K562 (cell line): ENCODE measurements at regions of chr6 and their contacts with region 1.

Region 1: GRCh38 chr6:167898673-167899311 is 72.1 kb downstream of the AFDN start:
- DNase-seq: peak in 2 of 4 experiments; percentile 27 to 43
- ATAC-seq: peak; percentile 59
- H3K4me3 ChIP-seq: no peak overlapping the region
- H3K27ac ChIP-seq: no peak overlapping the region
- H3K4me1 ChIP-seq: peaks cover 0 to 14% of the 10 kb centered on the region in 2 experiments; a peak in 4 of 5 replicates
- H3K27me3 ChIP-seq: no peaks in the 10 kb centered on the region
- CTCF ChIP-seq: peak; percentile 41 to 89 (median 53); a peak in 5 of 6 replicates
- EP300 ChIP-seq: no peak
- POLR2A ChIP-seq: no peak
- RAD21 ChIP-seq: peak; percentile 94 to 95

Region 2: DNA sequence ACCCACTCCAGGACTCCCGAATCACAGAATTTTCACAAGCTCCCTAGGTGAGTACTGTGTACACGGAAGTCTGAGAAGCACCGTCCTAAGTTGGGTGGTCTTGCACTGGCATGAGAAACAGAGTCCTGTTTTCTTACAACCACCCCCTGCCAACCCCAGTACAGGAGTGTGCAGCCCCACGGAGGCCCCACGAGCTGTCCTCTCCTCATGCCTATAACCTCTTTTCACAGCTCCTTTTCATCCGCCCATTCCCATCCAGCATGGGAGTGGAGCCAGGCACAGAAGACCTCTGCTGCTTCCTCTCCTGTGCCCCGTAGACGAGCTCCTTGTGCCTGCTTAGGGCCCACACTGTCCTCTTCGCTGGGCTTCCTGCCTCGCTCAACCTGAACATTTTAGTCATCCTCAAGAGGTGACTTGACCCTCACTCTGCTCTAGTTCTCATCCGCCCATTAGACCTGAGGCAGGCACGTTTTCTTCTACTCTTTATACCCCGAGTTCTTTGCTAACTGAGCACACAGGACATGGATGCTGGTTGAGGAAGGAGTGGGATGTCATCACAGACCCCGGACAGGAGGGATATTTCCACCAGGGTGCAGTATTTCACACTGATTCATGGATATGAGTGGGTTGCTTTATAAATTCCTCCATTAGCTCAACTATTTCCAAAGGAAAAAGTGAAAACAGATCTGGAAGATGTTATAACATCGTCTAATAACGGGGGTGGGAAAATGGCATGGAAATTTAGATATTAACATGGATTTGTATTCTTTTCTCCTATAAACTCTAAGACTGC is 413.4 kb before region 1 on chr6:
- CTCF ChIA-PET with region 1: interaction called, 3 read pairs
- POLR2A ChIA-PET with region 1: interaction called, 4 read pairs
- in situ Hi-C with region 1: loop called (anchors 10 kb)
- intact Hi-C with region 1: loop called (anchors 1 kb)
- DNase-seq: peak in 3 of 4 experiments; percentile 23 to 54 (median 38)
- ATAC-seq: peak; percentile 83
- H3K4me3 ChIP-seq: no peak overlapping the region
- H3K27ac ChIP-seq: no peak overlapping the region
- H3K4me1 ChIP-seq: no peaks in the 10 kb centered on the region
- H3K27me3 ChIP-seq: peaks cover 27 to 47% of the 10 kb centered on the region in 2 experiments; a peak in 4 of 5 replicates
- CTCF ChIP-seq: peak in 2 of 3 experiments; percentile 50 to 58; a peak in 4 of 6 replicates
- EP300 ChIP-seq: no peak
- POLR2A ChIP-seq: no peak
- RAD21 ChIP-seq: peak; percentile 60 to 62

Region 3: DNA sequence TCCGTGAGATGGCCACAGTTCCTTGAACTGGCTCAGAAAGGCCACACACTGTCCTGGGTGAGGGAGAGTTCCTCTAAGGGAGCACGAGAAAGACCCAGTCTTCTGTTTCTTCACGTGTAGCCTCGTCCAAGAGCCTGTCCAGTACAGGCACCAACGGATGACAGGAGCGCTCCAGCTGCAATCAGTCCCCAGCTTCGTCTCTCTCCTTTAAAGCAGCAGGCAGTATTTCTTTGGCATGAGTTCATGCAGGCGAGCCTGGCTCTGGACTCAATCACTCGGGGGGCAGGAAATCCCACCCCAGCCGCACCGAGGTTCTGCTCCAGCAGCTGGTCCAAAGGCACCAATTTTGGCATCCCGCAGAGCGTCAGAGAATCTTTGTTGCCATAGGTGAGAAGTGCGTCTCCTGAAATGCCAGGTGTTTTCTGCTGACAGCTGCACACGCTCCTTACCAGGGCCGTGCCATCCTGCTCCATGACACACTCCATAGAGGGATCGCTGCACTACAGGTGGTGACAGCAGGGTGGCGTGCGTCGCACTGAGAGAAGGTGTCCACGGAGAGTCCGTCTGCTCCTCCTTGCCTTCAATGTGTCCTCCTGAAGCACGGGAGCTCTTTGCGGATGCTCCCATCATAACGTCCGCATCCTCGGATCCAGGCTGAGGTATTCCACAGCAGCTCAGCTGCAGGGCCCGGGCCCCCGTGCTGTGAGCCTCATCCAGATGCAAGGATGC is 131.6 kb before region 1 on chr6:
- CTCF ChIA-PET with region 1: interaction called, 16 read pairs
- POLR2A ChIA-PET with region 1: interaction called, 3 read pairs
- in situ Hi-C with region 1: loop called (anchors 5 kb)
- intact Hi-C with region 1: loop called (anchors 1 kb)
- DNase-seq: peak; percentile 68 to 72 (median 72)
- ATAC-seq: peak; percentile 96
- H3K4me3 ChIP-seq: no peak overlapping the region
- H3K27ac ChIP-seq: no peak overlapping the region
- H3K4me1 ChIP-seq: no peaks in the 10 kb centered on the region
- H3K27me3 ChIP-seq: peaks cover 87% of the 10 kb centered on the region in 2 experiments
- CTCF ChIP-seq: peak; percentile 77 to 83 (median 83)
- EP300 ChIP-seq: no peak
- POLR2A ChIP-seq: no peak
- RAD21 ChIP-seq: peak; percentile 80 to 90

Region 4: DNA sequence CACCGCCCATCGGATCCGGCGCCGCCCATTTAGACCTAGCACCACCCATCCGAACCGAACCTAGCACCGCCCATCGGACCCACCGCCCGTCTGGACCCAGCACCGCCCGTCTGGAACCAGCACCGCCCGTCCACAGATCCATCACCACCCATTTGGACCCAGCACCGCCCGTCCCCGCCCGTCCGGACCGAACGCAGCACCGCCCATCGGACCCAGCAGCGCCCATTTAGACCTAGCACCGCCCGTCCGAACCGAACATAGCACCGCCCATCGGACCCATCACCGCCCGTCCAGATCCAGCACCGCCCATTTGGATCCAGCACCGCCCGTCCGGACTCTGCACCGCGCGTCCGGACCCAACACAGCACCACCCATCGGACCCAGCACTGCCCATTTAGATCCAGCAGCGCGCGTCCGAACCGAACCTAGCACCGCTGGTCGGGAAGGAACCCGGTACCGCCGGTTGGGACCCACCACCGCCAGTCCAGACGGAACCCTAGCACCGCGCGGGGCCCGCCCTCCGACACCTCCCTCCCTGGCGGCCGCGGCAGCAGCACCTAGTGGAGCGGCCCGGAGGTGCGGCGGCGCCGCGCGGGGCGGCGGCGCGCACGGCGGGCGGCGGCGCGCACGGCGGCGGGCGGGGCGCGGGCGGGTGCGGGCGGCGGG is 72.4 kb before region 1 on chr6:
- CTCF ChIA-PET with region 1: no interaction called
- POLR2A ChIA-PET with region 1: interaction called, 7 read pairs
- in situ Hi-C with region 1: no loop called
- intact Hi-C with region 1: loop called (anchors 2 kb)
- DNase-seq: peak; percentile 51 to 90 (median 76)
- ATAC-seq: peak; percentile 70
- H3K4me3 ChIP-seq: peak overlapping the region; percentile 85
- H3K27ac ChIP-seq: peak overlapping the region; percentile 56
- H3K4me1 ChIP-seq: peaks cover 24 to 30% of the 10 kb centered on the region in 2 experiments
- H3K27me3 ChIP-seq: no peaks in the 10 kb centered on the region
- CTCF ChIP-seq: peak; percentile 31 to 69 (median 58); a peak in 4 of 6 replicates
- EP300 ChIP-seq: no peak
- POLR2A ChIP-seq: no peak
- RAD21 ChIP-seq: peak in 1 of 2 experiments; percentile 33; a peak in 3 of 4 replicates

Region 5: DNA sequence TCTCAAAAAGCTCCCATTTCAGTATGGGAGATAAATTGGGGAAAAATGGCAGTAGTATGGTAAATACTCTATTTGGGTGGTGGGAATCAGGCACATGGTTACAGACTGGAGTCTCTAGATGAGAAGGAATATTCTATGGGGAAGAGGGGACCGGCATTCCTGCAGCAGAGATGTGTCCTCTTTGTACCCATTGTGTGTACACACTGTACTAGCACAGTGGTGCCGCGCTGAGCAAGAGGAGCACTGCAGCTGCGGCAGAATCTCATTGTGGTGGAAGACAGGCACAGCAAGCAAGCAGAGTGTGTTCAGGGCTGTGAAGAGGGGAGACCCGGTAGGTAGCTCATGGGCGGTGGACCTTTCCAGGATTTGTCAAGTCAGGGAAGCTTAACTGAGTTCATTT is 59.0 kb before region 1 on chr6:
- CTCF ChIA-PET with region 1: no interaction called
- POLR2A ChIA-PET with region 1: no interaction called
- in situ Hi-C with region 1: no loop called
- intact Hi-C with region 1: loop called (anchors 5 kb)
- DNase-seq: peak in 1 of 4 experiments; percentile 67
- ATAC-seq: peak; percentile 75
- H3K4me3 ChIP-seq: no peak overlapping the region
- H3K27ac ChIP-seq: peak overlapping the region; percentile 85
- H3K4me1 ChIP-seq: peaks cover 9 to 70% of the 10 kb centered on the region in 2 experiments
- H3K27me3 ChIP-seq: no peaks in the 10 kb centered on the region
- CTCF ChIP-seq: peak in 2 of 3 experiments; percentile 23 to 57; a peak in 4 of 6 replicates
- EP300 ChIP-seq: no peak
- POLR2A ChIP-seq: no peak
- RAD21 ChIP-seq: no peak; a peak in 1 of 4 replicates

Region 6: DNA sequence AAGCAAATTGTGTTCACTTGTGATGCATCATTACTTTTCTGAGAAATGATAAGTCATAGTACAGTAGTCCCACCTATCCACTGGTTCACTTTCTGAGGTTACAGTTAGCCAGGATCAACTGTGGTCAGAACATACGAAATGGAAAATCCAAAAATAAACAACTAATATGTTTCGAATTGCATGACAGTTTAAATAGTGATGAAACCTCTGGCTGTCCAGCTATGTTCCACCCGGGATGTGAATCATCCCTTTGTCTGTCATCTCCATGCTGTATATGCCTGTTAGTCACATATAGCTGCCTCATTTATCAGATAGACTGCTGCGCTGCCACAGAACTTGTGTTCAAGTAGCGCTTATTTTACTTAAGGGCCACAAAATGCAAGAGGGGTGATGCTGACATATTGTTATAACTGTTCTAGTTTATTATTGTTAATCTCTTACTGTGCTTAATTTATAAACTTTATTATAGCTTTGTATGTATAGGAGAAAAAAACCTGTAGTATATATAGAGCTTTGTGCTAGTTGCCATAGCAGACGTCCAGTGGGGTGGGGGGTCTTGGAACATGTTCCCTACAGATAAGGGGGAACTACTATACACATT is 42.9 kb before region 1 on chr6:
- CTCF ChIA-PET with region 1: no interaction called
- POLR2A ChIA-PET with region 1: no interaction called
- in situ Hi-C with region 1: no loop called
- intact Hi-C with region 1: loop called (anchors 5 kb)
- DNase-seq: peak; percentile 54 to 92 (median 72)
- ATAC-seq: peak; percentile 75
- H3K4me3 ChIP-seq: peak overlapping the region; percentile 2; the same call in 1 of the 2 replicates
- H3K27ac ChIP-seq: peak overlapping the region; percentile 96
- H3K4me1 ChIP-seq: peaks cover 7 to 83% of the 10 kb centered on the region in 2 experiments
- H3K27me3 ChIP-seq: no peaks in the 10 kb centered on the region
- CTCF ChIP-seq: no peak
- EP300 ChIP-seq: peak; percentile 93
- POLR2A ChIP-seq: peak; percentile 59
- RAD21 ChIP-seq: no peak

Region 7: GRCh38 chr6:167979436-167980139 is 80.8 kb after region 1 on chr6:
- CTCF ChIA-PET with region 1: no interaction called
- POLR2A ChIA-PET with region 1: no interaction called
- in situ Hi-C with region 1: no loop called
- intact Hi-C with region 1: no loop called
- DNase-seq: no peak
- ATAC-seq: no peak
- H3K4me3 ChIP-seq: no peak overlapping the region
- H3K27ac ChIP-seq: no peak overlapping the region
- H3K4me1 ChIP-seq: peaks cover 0 to 8% of the 10 kb centered on the region in 2 experiments; a peak in 1 of 5 replicates
- H3K27me3 ChIP-seq: peaks cover 32 to 35% of the 10 kb centered on the region in 2 experiments
- CTCF ChIP-seq: no peak
- EP300 ChIP-seq: no peak
- POLR2A ChIP-seq: no peak
- RAD21 ChIP-seq: no peak

Region 8: DNA sequence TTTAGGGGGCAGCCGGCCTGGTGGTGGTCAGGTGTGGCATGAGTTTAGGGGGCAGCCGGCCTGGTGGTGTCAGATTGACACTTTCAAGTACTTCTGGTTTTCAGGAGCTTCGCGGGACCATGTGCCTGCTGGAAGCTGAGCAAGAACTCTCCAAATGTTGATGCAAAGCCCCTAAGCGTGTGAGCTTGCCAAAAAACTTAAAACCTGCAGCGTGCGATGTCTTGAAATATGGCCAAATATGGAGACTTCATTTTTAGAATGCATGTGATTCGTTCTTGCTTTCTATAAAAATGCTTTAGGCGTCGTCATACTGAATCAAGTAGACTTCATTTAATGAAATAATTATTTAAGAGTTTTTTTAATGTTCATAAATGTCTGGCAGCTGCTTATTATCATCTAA is 691.6 kb after region 1 on chr6:
- CTCF ChIA-PET with region 1: no interaction called
- POLR2A ChIA-PET with region 1: no interaction called
- in situ Hi-C with region 1: no loop called
- intact Hi-C with region 1: no loop called
- DNase-seq: no peak
- ATAC-seq: no peak
- H3K4me3 ChIP-seq: no peak overlapping the region
- H3K27ac ChIP-seq: no peak overlapping the region
- H3K4me1 ChIP-seq: no peaks in the 10 kb centered on the region
- H3K27me3 ChIP-seq: peaks cover 0 to 5% of the 10 kb centered on the region in 2 experiments; a peak in 2 of 5 replicates
- CTCF ChIP-seq: no peak
- EP300 ChIP-seq: no peak
- POLR2A ChIP-seq: no peak
- RAD21 ChIP-seq: no peak